Heart right ventricle (tissue), 16 donors: ENCODE measurements at regions of chr11 and their contacts with region 1.

Region 1: DNA sequence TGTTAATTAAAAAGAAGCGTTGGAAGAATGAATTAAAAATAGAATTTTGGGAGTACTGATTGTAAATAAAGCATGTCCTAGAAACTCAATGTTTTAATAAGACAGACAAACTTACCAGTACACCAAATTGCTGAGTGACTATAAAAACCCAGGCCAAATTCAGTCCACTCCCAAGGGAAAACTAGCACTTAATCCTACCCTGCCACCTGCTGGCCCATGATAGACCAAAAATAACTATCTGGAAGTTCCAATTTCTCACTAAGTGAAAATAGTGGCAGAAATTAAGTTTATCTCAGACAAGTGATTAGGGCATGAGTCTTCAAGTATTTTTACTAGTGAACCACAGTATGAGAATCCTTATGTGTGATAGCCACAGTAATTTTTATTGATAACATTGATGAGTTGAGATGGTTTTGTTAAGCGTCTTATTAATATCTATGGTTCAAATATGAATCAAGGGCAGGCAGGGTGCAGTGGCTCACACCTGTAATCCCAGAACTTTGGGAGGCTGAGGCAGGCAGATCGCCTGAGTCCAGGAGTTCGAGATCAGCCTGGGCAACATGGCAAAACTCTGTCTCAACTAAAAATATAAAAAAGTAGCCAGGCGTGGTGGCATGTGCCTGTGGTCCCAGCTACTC is 9.8 kb upstream of the DDX10 start:
- DNase-seq: peak in 1 of 2 donors; percentile 27
- ATAC-seq: peak in 2 of 8 donors; percentile 33 to 52
- H3K4me3 ChIP-seq: no peak overlapping the region
- H3K27ac ChIP-seq: no peak overlapping the region
- H3K4me1 ChIP-seq: no peaks in the 10 kb centered on the region
- H3K27me3 ChIP-seq: peaks cover 0 to 10% (median 0%) of the 10 kb centered on the region in 7 donors
- CTCF ChIP-seq: peak in 8 of 9 donors; percentile 36 to 68 (median 58)

Region 2: DNA sequence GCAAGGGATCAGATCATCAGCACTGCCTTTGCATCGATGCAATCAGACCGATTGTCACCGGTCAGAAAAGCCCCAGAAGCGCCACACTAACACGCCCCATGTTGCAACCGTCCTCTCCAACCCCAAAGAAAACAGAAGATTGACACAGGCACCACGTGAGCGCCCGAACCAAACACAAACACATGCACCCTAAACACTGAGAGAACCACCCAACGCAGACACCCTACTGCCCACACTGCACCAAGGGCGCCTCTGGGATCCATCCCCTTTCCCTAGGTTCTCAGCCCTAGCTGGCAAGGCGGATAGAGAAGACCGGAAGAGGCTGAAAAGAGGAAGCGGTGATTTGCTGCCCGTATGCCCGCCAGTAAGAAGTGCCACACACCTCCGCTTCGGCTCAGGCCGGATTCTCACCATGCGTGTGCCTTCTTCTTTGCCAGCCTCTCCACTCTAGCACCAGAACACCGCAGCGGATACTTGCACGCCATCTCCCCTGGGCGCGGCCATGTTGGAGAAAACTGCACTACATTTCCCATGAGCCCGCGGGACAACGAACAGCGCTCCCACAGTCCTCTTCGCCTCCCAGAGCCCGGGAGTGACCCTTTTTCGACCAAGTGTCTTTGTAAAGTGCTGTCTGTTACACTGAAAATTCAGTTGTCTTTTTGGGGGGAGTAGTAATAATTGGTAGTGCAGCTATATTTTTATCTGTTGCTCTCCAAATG is 1089.7 kb before region 1 on chr11 and contains the start of gene ALKBH8:
- intact Hi-C with region 1: loop called in 1 of 10 experiments (anchors 10 kb)
- DNase-seq: peak; percentile 72 to 81
- ATAC-seq: peak; percentile 96 to 98 (median 96)
- H3K4me3 ChIP-seq: peak within 1 kb of the TSS; percentile 60 to 98 (median 88)
- H3K27ac ChIP-seq: peak within 1 kb of the TSS in 9 of 10 donors; percentile 72 to 91 (median 80)
- H3K4me1 ChIP-seq: peaks cover 0 to 34% (median 25%) of the 10 kb centered on the region in 9 donors
- H3K27me3 ChIP-seq: peaks cover 0 to 13% (median 5%) of the 10 kb centered on the region in 7 donors
- CTCF ChIP-seq: no peak
- total RNA-seq, gene ALKBH8: 5.4 to 7.8 (median 6.8) TPM

Region 3: GRCh38 chr11:108008656-108009496 is 646.2 kb before region 1 on chr11 and contains the start of gene CUL5:
- intact Hi-C with region 1: loop called in 4 of 10 experiments (anchors 5 to 10 kb)
- DNase-seq: peak; percentile 92 to 94
- ATAC-seq: peak; percentile 96 to 98 (median 98)
- H3K4me3 ChIP-seq: peak within 1 kb of the TSS; percentile 73 to 100 (median 88)
- H3K27ac ChIP-seq: peak within 1 kb of the TSS; percentile 91 to 99 (median 97)
- H3K4me1 ChIP-seq: peaks cover 2 to 47% (median 41%) of the 10 kb centered on the region in 9 donors
- H3K27me3 ChIP-seq: no peaks in the 10 kb centered on the region
- CTCF ChIP-seq: peak; percentile 83 to 94 (median 91)
- total RNA-seq, gene CUL5: 34.8 to 51.3 (median 42.6) TPM

Region 4: DNA sequence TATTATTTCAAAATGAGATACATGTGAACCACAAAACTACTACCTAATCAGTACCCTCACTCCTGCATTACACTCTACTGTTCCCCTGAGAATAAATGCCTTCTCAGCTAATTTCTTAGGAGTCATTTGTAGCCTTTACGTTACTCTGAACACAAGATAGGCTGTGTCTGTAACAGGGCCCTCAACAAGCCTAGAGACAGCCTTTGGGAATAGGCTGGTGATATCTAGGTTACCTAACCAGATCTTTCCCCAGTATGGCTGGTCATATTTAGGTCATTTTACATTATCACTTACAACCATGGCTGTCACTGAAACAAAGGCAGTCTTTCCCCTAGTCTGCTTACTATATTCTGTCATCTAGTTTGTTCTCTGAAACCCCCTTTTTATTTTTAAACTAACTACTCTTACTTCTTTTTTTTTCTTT is 418.0 kb before region 1 on chr11:
- intact Hi-C with region 1: loop called in 1 of 10 experiments (anchors 10 kb)
- DNase-seq: no peak
- ATAC-seq: no peak
- H3K4me3 ChIP-seq: no peak overlapping the region
- H3K27ac ChIP-seq: peak overlapping the region in 2 of 10 donors; percentile 15 to 78
- H3K4me1 ChIP-seq: peaks cover 0 to 44% (median 0%) of the 10 kb centered on the region in 9 donors
- H3K27me3 ChIP-seq: no peaks in the 10 kb centered on the region
- CTCF ChIP-seq: no peak

Region 5: GRCh38 chr11:108340970-108341369 is 314.1 kb before region 1 on chr11:
- intact Hi-C with region 1: loop called in 4 of 10 experiments (anchors 5 to 10 kb)
- DNase-seq: no peak
- ATAC-seq: no peak
- H3K4me3 ChIP-seq: no peak overlapping the region
- H3K27ac ChIP-seq: no peak overlapping the region
- H3K4me1 ChIP-seq: no peaks in the 10 kb centered on the region
- H3K27me3 ChIP-seq: no peaks in the 10 kb centered on the region
- CTCF ChIP-seq: no peak

Region 6: GRCh38 chr11:108414958-108415357 is 240.2 kb before region 1 on chr11:
- intact Hi-C with region 1: loop called in 1 of 10 experiments (anchors 10 kb)
- DNase-seq: no peak
- ATAC-seq: no peak
- H3K4me3 ChIP-seq: no peak overlapping the region
- H3K27ac ChIP-seq: no peak overlapping the region
- H3K4me1 ChIP-seq: no peaks in the 10 kb centered on the region
- H3K27me3 ChIP-seq: no peaks in the 10 kb centered on the region
- CTCF ChIP-seq: no peak

Region 7: GRCh38 chr11:109132539-109132938 is 477.4 kb after region 1 on chr11:
- intact Hi-C with region 1: no loop called
- DNase-seq: no peak
- ATAC-seq: no peak
- H3K4me3 ChIP-seq: no peak overlapping the region
- H3K27ac ChIP-seq: no peak overlapping the region
- H3K4me1 ChIP-seq: no peaks in the 10 kb centered on the region
- H3K27me3 ChIP-seq: no peaks in the 10 kb centered on the region
- CTCF ChIP-seq: no peak